Activated B cell treated with CpG ODN at 0.5 μM for 24 hours (primary cell): ENCODE measurements at regions of chrX and their contacts with region 1.

Region 1: DNA sequence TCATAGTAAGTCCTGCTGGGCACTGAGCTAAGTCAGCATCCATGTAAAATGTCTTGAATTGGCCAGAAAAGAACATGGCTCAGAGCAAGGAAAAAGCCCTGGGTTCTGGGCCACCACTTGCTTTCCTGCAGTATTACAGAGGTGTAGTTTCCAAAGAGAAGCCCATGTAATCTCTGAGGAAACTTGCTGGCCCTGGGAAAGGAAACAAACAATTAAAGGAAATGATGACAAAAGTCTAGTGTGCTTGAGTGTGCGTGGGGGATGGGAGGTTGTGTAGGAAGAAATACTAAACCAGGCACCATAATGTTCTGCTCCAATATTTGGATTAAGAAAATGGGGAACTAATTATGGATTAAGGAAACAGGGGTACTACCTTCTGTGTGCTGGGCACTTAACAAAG is 39.5 kb upstream of the SMIM10L2A start:
- DNase-seq: no peak
- ATAC-seq: no peak
- H3K4me3 Mint-ChIP-seq: no peak overlapping the region
- H3K27ac Mint-ChIP-seq: no peak overlapping the region
- H3K4me1 Mint-ChIP-seq: no peaks in the 10 kb centered on the region
- H3K27me3 Mint-ChIP-seq: peaks cover 5% of the 10 kb centered on the region
- CTCF ChIP-seq: no peak

Region 2: GRCh38 chrX:134957836-134958235 is 424.4 kb before region 1 on chrX:
- CTCF ChIA-PET with region 1: no interaction called
- POLR2A ChIA-PET with region 1: interaction called, 10 read pairs
- intact Hi-C with region 1: no loop called
- DNase-seq: no peak
- ATAC-seq: no peak
- H3K4me3 Mint-ChIP-seq: no peak overlapping the region
- H3K27ac Mint-ChIP-seq: no peak overlapping the region
- H3K4me1 Mint-ChIP-seq: no peaks in the 10 kb centered on the region
- H3K27me3 Mint-ChIP-seq: peaks cover 6% of the 10 kb centered on the region
- CTCF ChIP-seq: no peak

Region 3: GRCh38 chrX:135354288-135354687 is 28.0 kb before region 1 on chrX:
- CTCF ChIA-PET with region 1: no interaction called
- POLR2A ChIA-PET with region 1: no interaction called
- intact Hi-C with region 1: no loop called
- DNase-seq: no peak
- ATAC-seq: no peak
- H3K4me3 Mint-ChIP-seq: no peak overlapping the region
- H3K27ac Mint-ChIP-seq: no peak overlapping the region
- H3K4me1 Mint-ChIP-seq: peaks cover 4% of the 10 kb centered on the region
- H3K27me3 Mint-ChIP-seq: no peaks in the 10 kb centered on the region
- CTCF ChIP-seq: no peak